CD8-positive, alpha-beta T cell (primary cell): ENCODE measurements at regions of chr6 and their contacts with region 1.

Region 1: DNA sequence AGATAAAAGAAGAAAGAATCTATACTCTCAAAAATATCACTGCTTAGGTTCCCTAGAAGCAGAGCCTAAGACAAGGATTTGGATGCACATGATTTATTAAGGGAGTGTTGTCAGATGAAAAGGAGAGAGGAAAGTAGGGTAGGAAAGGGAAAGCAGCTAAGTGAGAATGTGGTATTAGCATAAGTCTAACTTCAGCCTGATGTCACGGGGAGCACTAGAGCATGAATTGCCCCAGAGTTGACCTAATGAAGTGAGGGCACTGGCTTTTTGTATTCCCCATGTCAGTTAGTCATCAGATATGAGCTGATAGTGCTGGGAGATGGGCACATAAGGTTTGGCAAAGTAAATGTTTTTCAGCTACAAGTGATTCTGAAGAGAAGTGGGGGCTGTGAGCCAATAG is 129.0 kb upstream of the THEMIS start:
- DNase-seq: no peak
- ATAC-seq: no peak
- H3K4me3 ChIP-seq: no peak overlapping the region
- H3K4me3 Mint-ChIP-seq: no peak overlapping the region
- H3K27ac ChIP-seq: no peak overlapping the region
- H3K27ac Mint-ChIP-seq: no peak overlapping the region
- H3K4me1 ChIP-seq: peaks cover 43% of the 10 kb centered on the region
- H3K4me1 Mint-ChIP-seq: peaks cover 60% of the 10 kb centered on the region
- H3K27me3 ChIP-seq: no peaks in the 10 kb centered on the region
- H3K27me3 Mint-ChIP-seq: no peaks in the 10 kb centered on the region
- CTCF ChIP-seq: no peak

Region 2: DNA sequence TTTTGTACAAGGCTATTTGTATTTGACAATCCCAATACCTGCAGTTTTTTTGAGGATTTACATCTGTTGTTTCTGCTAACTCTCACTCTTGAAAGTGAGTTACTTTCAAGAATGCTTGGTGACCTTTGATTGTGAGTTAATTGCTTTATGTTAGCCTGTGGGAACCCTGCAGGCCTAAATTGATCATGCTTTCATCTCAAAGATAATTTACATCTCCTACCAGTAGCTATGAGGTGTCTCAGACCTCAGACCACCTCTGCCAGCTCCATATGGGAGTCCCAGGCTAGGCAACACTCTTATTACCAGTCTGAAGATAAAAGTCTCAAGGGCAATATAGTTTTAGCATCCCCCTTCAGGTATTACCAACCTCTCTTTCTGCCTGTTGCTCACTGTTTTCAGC is 12.5 kb before region 1 on chr6:
- CTCF ChIA-PET with region 1: no interaction called
- POLR2A ChIA-PET with region 1: no interaction called
- intact Hi-C with region 1: loop called in 1 of 2 experiments (anchors 2 kb)
- DNase-seq: peak in 1 of 9 experiments; percentile 25
- ATAC-seq: no peak
- H3K4me3 ChIP-seq: no peak overlapping the region
- H3K4me3 Mint-ChIP-seq: no peak overlapping the region
- H3K27ac ChIP-seq: no peak overlapping the region
- H3K27ac Mint-ChIP-seq: no peak overlapping the region
- H3K4me1 ChIP-seq: no peaks in the 10 kb centered on the region
- H3K4me1 Mint-ChIP-seq: peaks cover 35% of the 10 kb centered on the region
- H3K27me3 ChIP-seq: no peaks in the 10 kb centered on the region
- H3K27me3 Mint-ChIP-seq: no peaks in the 10 kb centered on the region
- CTCF ChIP-seq: no peak